A549 (cell line): ENCODE measurements at regions of chr12 and their contacts with region 1.

Region 1: DNA sequence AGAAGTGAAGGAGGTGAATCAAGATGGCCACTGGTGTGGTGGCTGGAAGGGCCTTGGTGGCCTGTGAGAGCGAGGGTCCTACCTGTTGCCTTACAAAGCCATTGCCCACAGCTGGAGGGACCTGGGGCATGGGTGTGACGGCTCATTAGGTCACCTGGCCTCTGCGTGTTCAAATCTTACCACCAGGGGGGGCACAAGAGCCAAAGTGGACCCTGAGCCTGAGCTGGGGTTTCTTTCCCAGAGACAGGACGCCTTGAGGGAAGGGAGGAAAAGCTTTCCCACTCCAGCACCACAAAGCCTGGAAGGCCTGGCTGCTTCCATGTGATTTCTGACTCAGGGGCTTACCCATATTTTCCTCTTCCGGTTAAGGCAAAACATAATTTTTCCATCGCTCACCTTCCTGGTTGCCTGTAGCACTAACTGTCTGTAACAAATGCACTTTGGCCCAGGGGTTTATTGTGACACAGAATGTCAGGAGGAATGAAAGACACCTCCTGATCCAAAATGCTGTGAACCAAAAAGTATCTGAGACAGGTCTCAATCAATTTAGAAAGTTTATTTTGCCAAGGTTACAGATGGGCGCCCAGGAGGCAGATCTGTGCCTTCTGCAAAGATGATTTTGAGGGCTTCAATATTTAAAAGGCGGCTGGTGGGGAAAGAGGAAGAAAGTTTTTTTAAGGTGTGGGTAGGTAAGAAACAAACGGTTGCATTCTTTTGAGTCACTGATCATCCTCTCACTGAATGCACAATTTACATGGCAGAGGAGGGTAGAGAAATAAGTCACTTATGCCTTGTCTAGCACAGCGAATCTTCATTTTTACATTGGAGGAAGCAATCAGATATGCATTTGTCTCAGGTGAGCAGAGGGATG is 4.3 kb upstream of the CD9 start:
- DNase-seq: peak; percentile 87 to 98
- ATAC-seq: peak; percentile 76 to 92
- H3K4me3 ChIP-seq: no peak overlapping the region
- H3K27ac ChIP-seq: peak overlapping the region; percentile 53 to 76
- H3K4me1 ChIP-seq: peaks cover 14% of the 10 kb centered on the region
- CTCF ChIP-seq: peak; percentile 89
- EP300 ChIP-seq: no peak
- POLR2A ChIP-seq: no peak; the same call in 1 of the 2 replicates
- RAD21 ChIP-seq: peak; percentile 93 to 96

Region 2: GRCh38 chr12:5988659-5989116 is 207.2 kb before region 1 on chr12:
- CTCF ChIA-PET with region 1: interaction called, 13 read pairs
- POLR2A ChIA-PET with region 1: no interaction called
- DNase-seq: peak; percentile 73 to 80
- ATAC-seq: peak; percentile 92 to 99
- H3K4me3 ChIP-seq: no peak overlapping the region
- H3K27ac ChIP-seq: no peak overlapping the region
- H3K4me1 ChIP-seq: no peaks in the 10 kb centered on the region
- CTCF ChIP-seq: peak; percentile 90
- EP300 ChIP-seq: no peak
- POLR2A ChIP-seq: no peak
- RAD21 ChIP-seq: peak; percentile 94 to 95

Region 3: GRCh38 chr12:6062757-6063735 is 132.9 kb before region 1 on chr12:
- CTCF ChIA-PET with region 1: interaction called, 30 read pairs
- POLR2A ChIA-PET with region 1: no interaction called
- DNase-seq: peak; percentile 59 to 77
- ATAC-seq: peak; percentile 71 to 90
- H3K4me3 ChIP-seq: no peak overlapping the region
- H3K27ac ChIP-seq: no peak overlapping the region
- H3K4me1 ChIP-seq: no peaks in the 10 kb centered on the region
- CTCF ChIP-seq: peak; percentile 84
- EP300 ChIP-seq: no peak
- POLR2A ChIP-seq: no peak
- RAD21 ChIP-seq: peak; percentile 91 to 96

Region 4: GRCh38 chr12:6092784-6093722 is 102.8 kb before region 1 on chr12:
- CTCF ChIA-PET with region 1: interaction called, 13 read pairs
- POLR2A ChIA-PET with region 1: interaction called, 3 read pairs
- DNase-seq: peak; percentile 85
- ATAC-seq: peak; percentile 96 to 97
- H3K4me3 ChIP-seq: peak overlapping the region; percentile 25; the same call in 2 of the 3 replicates
- H3K27ac ChIP-seq: peak overlapping the region; percentile 65 to 82
- H3K4me1 ChIP-seq: peaks cover 26% of the 10 kb centered on the region
- CTCF ChIP-seq: no peak
- EP300 ChIP-seq: no peak
- POLR2A ChIP-seq: 0 out of 2 replicates have a peak, but pooled peaks have one; percentile 16
- RAD21 ChIP-seq: no peak; a peak in 1 of 5 replicates

Region 5: GRCh38 chr12:6215932-6216494 is 20.1 kb after region 1 on chr12:
- CTCF ChIA-PET with region 1: interaction called, 20 read pairs
- POLR2A ChIA-PET with region 1: interaction called, 3 read pairs
- DNase-seq: peak; percentile 96 to 98
- ATAC-seq: peak; percentile 97 to 98
- H3K4me3 ChIP-seq: no peak overlapping the region
- H3K27ac ChIP-seq: peak overlapping the region; percentile 78 to 95
- H3K4me1 ChIP-seq: peaks cover 49% of the 10 kb centered on the region
- CTCF ChIP-seq: no peak
- EP300 ChIP-seq: no peak
- POLR2A ChIP-seq: no peak
- RAD21 ChIP-seq: no peak

Region 6: GRCh38 chr12:6250343-6250742 is 54.4 kb after region 1 on chr12:
- CTCF ChIA-PET with region 1: interaction called, 25 read pairs
- POLR2A ChIA-PET with region 1: no interaction called
- DNase-seq: no peak
- ATAC-seq: peak; percentile 26 to 43; a peak in 3 of 6 replicates
- H3K4me3 ChIP-seq: no peak overlapping the region
- H3K27ac ChIP-seq: no peak overlapping the region
- H3K4me1 ChIP-seq: no peaks in the 10 kb centered on the region
- CTCF ChIP-seq: no peak
- EP300 ChIP-seq: no peak
- POLR2A ChIP-seq: no peak
- RAD21 ChIP-seq: no peak

Region 7: DNA sequence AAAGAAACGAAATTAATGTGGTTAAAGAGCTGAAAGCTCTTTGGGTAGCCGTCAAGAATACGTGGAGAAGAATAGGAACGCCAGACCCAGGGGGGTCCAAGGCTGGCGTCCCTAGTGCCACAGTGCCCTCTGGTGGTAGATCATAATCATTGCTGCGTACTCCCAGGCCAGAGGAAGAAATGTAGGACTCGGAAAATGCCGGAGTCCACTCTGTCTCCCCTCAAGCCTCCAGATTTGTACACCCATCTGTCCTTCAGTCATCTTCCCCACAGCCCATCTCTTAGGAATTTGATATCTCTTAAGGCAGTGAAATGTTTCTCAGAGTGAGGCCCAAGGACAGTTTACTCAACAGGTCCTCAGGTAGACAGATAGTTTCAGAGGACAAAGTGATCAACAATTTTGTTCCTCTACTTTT is 89.2 kb after region 1 on chr12:
- CTCF ChIA-PET with region 1: interaction called, 529 read pairs
- POLR2A ChIA-PET with region 1: interaction called, 7 read pairs
- DNase-seq: peak; percentile 73 to 95
- ATAC-seq: peak; percentile 65 to 80
- H3K4me3 ChIP-seq: no peak overlapping the region
- H3K27ac ChIP-seq: peak overlapping the region; percentile 34 to 64; a peak in 2 of 6 replicates
- H3K4me1 ChIP-seq: peaks cover 25% of the 10 kb centered on the region
- CTCF ChIP-seq: peak; percentile 97
- EP300 ChIP-seq: no peak
- POLR2A ChIP-seq: no peak
- RAD21 ChIP-seq: peak; percentile 97 to 100